Uterus (tissue), 4 donors: ENCODE measurements at regions of chr11 and their contacts with region 1.

Region 1: GRCh38 chr11:44538375-44539054 is 26.9 kb upstream of the CD82 start:
- DNase-seq: peak; percentile 73 to 81
- H3K4me3 ChIP-seq: no peak overlapping the region
- H3K27ac ChIP-seq: no peak overlapping the region
- H3K4me1 ChIP-seq: no peaks in the 10 kb centered on the region
- H3K27me3 ChIP-seq: no peaks in the 10 kb centered on the region
- CTCF ChIP-seq: peak; percentile 93 to 98 (median 97)
- POLR2A ChIP-seq: peak in 1 of 2 donors; percentile 22

Region 2: GRCh38 chr11:44095506-44096394 is 442.8 kb before region 1 on chr11 and contains the start of gene EXT2:
- intact Hi-C with region 1: loop called (anchors 10 kb)
- DNase-seq: peak; percentile 86 to 89
- H3K4me3 ChIP-seq: peak within 1 kb of the TSS; percentile 66 to 72
- H3K27ac ChIP-seq: peak within 1 kb of the TSS; percentile 72 to 74
- H3K4me1 ChIP-seq: no peaks in the 10 kb centered on the region
- H3K27me3 ChIP-seq: no peaks in the 10 kb centered on the region
- CTCF ChIP-seq: peak; percentile 92 to 94 (median 93)
- POLR2A ChIP-seq: peak; percentile 37 to 72
- total RNA-seq, gene EXT2: 52.6 to 116 (median 81.3) TPM

Region 3: DNA sequence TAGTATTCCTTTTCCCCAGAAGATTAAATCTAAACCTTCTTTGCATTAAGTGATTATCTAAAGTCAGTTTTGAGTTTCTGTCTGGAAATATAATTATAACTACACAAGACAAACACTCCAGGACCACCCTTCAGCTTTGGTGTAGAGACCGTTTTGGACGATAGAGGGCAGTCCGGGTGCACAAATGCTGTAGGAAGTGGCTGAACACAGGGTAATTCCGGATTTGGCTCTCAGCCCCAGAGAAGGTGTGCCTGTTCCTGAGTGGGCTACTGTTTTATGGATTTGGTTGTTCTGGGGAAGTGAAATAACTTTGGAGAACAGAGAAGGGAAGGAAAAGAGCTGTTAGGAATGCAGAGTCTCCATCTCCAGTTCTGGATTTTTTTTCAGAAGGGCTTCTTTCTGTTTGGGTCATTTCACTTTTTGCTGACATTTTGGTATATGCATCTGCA is 428.3 kb before region 1 on chr11:
- intact Hi-C with region 1: loop called (anchors 10 kb)
- DNase-seq: peak; percentile 37 to 58
- H3K4me3 ChIP-seq: no peak overlapping the region
- H3K27ac ChIP-seq: no peak overlapping the region
- H3K4me1 ChIP-seq: no peaks in the 10 kb centered on the region
- H3K27me3 ChIP-seq: no peaks in the 10 kb centered on the region
- CTCF ChIP-seq: peak; percentile 55 to 71 (median 65)
- POLR2A ChIP-seq: no peak

Region 4: GRCh38 chr11:44286268-44286880 is 252.1 kb before region 1 on chr11:
- intact Hi-C with region 1: loop called (anchors 2 kb)
- DNase-seq: peak; percentile 39 to 53
- H3K4me3 ChIP-seq: no peak overlapping the region
- H3K27ac ChIP-seq: no peak overlapping the region
- H3K4me1 ChIP-seq: no peaks in the 10 kb centered on the region
- H3K27me3 ChIP-seq: no peaks in the 10 kb centered on the region
- CTCF ChIP-seq: peak; percentile 87 to 88 (median 88)
- POLR2A ChIP-seq: no peak